Ovary (tissue), 10 donors: ENCODE measurements at regions of chr10 and their contacts with region 1.

Region 1: GRCh38 chr10:79184145-79184625 is 115.4 kb downstream of the ZMIZ1 start:
- DNase-seq: peak in 1 of 5 donors; percentile 42
- H3K4me3 ChIP-seq: no peak overlapping the region
- H3K27ac ChIP-seq: peak overlapping the region in 1 of 2 donors; percentile 88
- H3K4me1 ChIP-seq: peaks cover 67% of the 10 kb centered on the region
- H3K27me3 ChIP-seq: no peaks in the 10 kb centered on the region
- CTCF ChIP-seq: no peak
- EP300 ChIP-seq: no peak
- POLR2A ChIP-seq: no peak

Region 2: GRCh38 chr10:78047314-78047891 is 1136.8 kb before region 1 on chr10:
- intact Hi-C with region 1: loop called in 1 of 4 experiments (anchors 5 kb)
- DNase-seq: peak; percentile 83 to 92 (median 91)
- H3K4me3 ChIP-seq: no peak overlapping the region
- H3K27ac ChIP-seq: no peak overlapping the region
- H3K4me1 ChIP-seq: no peaks in the 10 kb centered on the region
- H3K27me3 ChIP-seq: no peaks in the 10 kb centered on the region
- CTCF ChIP-seq: peak; percentile 77 to 83 (median 78)
- EP300 ChIP-seq: no peak
- POLR2A ChIP-seq: no peak

Region 3: DNA sequence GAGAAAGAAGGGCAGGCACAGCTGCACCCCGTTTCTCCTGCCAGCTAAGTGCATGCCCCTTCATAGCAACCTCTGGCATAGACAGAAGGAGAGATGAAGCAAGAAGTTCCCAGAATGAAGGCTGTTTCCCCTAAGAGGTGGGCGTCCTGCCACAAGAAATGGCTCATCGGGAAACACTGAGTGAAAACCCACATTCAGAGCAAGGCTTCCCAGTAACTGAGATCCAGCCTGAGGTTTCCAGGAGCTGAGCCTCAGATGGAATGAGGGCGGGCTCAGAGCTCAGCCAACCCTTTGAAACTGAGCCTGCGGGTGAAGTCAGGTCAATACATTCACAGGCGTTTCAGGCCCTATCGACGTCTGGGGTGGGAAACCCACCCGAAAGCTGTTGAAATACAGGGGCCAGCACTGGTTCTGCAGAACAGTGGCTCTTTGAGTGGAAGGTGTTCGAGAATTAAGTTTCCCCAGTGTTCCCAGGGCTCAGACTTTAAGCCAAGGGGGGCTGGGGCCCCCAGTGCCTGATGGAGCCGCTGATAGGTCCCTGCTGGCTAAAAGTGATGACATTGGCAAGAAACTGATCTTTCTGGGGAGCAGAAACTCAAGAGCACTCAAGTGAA is 640.3 kb before region 1 on chr10:
- intact Hi-C with region 1: loop called in 1 of 4 experiments (anchors 10 kb)
- DNase-seq: peak; percentile 74 to 87 (median 80)
- H3K4me3 ChIP-seq: no peak overlapping the region
- H3K27ac ChIP-seq: no peak overlapping the region
- H3K4me1 ChIP-seq: peaks cover 22% of the 10 kb centered on the region
- H3K27me3 ChIP-seq: no peaks in the 10 kb centered on the region
- CTCF ChIP-seq: no peak
- EP300 ChIP-seq: peak; percentile 99
- POLR2A ChIP-seq: no peak

Region 4: DNA sequence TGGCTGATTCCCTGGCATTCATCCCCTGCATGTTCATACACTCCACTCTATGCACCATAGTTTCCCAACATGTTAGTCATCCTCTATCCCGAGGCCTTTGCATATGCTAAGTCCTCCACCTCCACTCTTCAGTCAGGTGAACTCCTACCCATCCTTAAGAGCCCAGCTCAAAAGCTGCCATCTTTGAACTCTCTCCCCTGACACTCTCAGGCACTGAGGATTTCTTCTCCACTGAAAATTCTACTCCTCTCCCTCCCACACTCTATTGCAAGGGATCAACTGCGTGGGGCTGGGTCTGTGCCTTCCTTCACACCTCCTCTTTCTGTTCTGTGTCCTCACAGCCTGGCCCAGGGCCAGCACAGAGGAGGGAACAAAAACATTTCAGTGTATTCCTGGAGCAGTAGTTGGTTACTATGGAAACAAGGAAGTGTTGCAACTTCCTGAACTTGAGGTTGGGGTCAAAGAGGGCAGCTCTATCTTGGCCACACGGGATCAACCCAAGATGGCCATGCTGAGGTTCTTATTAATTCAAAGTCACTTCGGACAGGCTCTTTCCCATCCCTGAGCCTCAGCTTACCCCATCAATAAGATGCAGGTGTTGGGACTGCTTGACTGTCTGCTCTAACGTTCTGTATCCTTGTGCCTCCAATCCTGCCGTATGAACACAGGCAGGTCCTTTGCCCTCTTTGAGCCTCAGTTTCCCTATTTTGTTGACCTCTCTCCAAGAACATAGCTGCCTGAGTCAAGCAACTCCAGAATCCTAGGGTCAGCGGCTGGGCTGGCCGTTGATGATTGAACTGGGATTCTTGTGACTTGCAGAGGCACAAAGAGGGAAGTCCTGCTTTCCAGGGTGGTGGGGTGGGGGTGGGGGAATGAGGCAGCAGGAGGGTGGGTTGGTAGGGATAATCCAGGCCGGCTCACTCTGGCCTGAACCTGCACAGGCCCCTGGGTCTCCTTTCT is 99.9 kb before region 1 on chr10:
- intact Hi-C with region 1: loop called in 1 of 4 experiments (anchors 5 kb)
- DNase-seq: peak; percentile 88 to 98 (median 94)
- H3K4me3 ChIP-seq: no peak overlapping the region
- H3K27ac ChIP-seq: peak overlapping the region; percentile 72 to 75
- H3K4me1 ChIP-seq: peaks cover 61% of the 10 kb centered on the region
- H3K27me3 ChIP-seq: no peaks in the 10 kb centered on the region
- CTCF ChIP-seq: no peak
- EP300 ChIP-seq: peak; percentile 53
- POLR2A ChIP-seq: no peak

Region 5: DNA sequence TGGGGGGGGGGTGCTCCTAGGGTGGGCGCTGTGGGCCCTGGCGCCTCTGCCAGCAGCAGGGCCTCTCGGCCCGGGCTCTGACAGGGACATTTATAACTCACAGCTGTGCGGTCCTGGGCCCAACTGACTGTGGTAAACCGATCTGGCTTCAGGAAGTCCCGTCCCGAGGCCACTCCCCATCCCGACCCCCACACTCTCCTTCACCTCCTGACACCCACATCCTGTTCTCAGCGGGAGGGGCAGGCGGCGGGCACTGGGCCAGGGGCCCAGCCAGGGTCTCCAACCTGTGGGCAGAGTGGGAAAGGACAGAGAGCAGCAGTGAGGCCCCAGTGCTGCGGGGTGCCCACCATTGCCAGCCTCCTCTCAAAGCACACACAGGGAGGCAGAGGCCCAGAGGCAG is 46.4 kb before region 1 on chr10:
- intact Hi-C with region 1: loop called in 1 of 4 experiments (anchors 2 kb)
- DNase-seq: peak; percentile 57 to 76 (median 70)
- H3K4me3 ChIP-seq: no peak overlapping the region
- H3K27ac ChIP-seq: peak overlapping the region; percentile 45 to 83
- H3K4me1 ChIP-seq: peaks cover 49% of the 10 kb centered on the region
- H3K27me3 ChIP-seq: no peaks in the 10 kb centered on the region
- CTCF ChIP-seq: no peak
- EP300 ChIP-seq: no peak
- POLR2A ChIP-seq: no peak

Region 6: GRCh38 chr10:79260786-79261740 is 76.9 kb after region 1 on chr10:
- intact Hi-C with region 1: no loop called
- DNase-seq: peak; percentile 58 to 79 (median 70)
- H3K4me3 ChIP-seq: no peak overlapping the region
- H3K27ac ChIP-seq: peak overlapping the region in 1 of 2 donors; percentile 63
- H3K4me1 ChIP-seq: peaks cover 20% of the 10 kb centered on the region
- H3K27me3 ChIP-seq: no peaks in the 10 kb centered on the region
- CTCF ChIP-seq: no peak
- EP300 ChIP-seq: no peak
- POLR2A ChIP-seq: no peak